CD4-positive, alpha-beta T cell (primary cell): ENCODE measurements at regions of chrX and their contacts with region 1.

Region 1: DNA sequence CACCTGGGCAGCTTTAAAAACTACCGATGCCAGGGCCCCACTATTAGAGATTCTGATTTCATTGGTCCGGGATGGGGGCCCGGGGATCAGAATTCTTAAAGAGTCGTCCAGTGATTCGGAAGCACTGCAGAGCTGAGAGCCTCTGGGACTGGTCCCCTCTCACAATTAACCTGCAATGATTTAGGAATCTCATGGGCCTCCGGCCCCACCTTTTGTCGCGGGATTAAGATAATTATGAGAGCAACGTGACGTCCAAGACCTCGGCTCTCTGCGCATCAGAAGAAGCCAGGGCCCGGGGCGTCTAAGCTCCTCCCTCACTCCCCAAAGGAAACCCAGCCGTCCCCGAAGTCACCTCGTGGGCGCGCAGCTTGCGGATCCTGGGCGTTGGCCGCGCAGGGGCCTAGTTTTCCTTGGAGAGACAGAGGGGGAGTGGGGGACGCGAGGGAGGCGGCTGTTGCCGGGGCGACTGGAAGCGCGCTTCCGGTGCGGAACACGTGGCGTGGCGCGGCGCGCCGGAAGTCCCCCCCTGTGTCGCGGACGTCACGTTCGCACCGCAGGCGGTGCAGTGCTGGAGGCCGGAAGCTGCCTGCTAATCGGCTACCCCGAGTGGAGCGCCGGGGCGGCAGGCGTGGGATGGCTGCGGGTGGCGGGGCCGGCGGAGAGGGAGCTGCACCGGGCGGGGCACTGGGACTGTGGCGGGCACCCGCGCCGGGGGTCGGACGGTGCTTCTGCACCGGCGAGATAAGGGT is at the start of gene GEMIN8:
- DNase-seq: peak; percentile 73 to 94 (median 84)
- ATAC-seq: peak; percentile 85
- H3K4me3 ChIP-seq: peak within 1 kb of the TSS; percentile 82
- H3K4me3 Mint-ChIP-seq: peak within 1 kb of the TSS; percentile 99
- H3K27ac ChIP-seq: peak within 1 kb of the TSS; percentile 82 to 93
- H3K27ac Mint-ChIP-seq: peak within 1 kb of the TSS; percentile 97
- H3K4me1 ChIP-seq: peaks cover 29% of the 10 kb centered on the region
- H3K4me1 Mint-ChIP-seq: peaks cover 52% of the 10 kb centered on the region
- H3K27me3 ChIP-seq: no peaks in the 10 kb centered on the region
- H3K27me3 Mint-ChIP-seq: no peaks in the 10 kb centered on the region
- CTCF ChIP-seq: no peak
- total RNA-seq, gene GEMIN8: 10.2 to 11.1 TPM

Region 2: GRCh38 chrX:13506574-13506973 is 523.0 kb before region 1 on chrX:
- CTCF ChIA-PET with region 1: interaction called, 7 read pairs
- POLR2A ChIA-PET with region 1: interaction called, 6 read pairs
- intact Hi-C with region 1: loop called in 1 of 2 experiments (anchors 1 kb)
- DNase-seq: peak; percentile 12 to 73 (median 38)
- ATAC-seq: no peak
- H3K4me3 ChIP-seq: no peak overlapping the region
- H3K4me3 Mint-ChIP-seq: no peak overlapping the region
- H3K27ac ChIP-seq: no peak overlapping the region
- H3K27ac Mint-ChIP-seq: no peak overlapping the region
- H3K4me1 ChIP-seq: no peaks in the 10 kb centered on the region
- H3K4me1 Mint-ChIP-seq: no peaks in the 10 kb centered on the region
- H3K27me3 ChIP-seq: no peaks in the 10 kb centered on the region
- H3K27me3 Mint-ChIP-seq: no peaks in the 10 kb centered on the region
- CTCF ChIP-seq: peak; percentile 76

Region 3: GRCh38 chrX:13658602-13659001 is 371.0 kb before region 1 on chrX:
- CTCF ChIA-PET with region 1: interaction called, 3 read pairs
- POLR2A ChIA-PET with region 1: interaction called, 13 read pairs
- intact Hi-C with region 1: loop called (anchors 1 to 2 kb)
- DNase-seq: peak in 4 of 14 experiments; percentile 14 to 76 (median 74)
- ATAC-seq: peak; percentile 59
- H3K4me3 ChIP-seq: no peak overlapping the region
- H3K4me3 Mint-ChIP-seq: peak overlapping the region; percentile 7
- H3K27ac ChIP-seq: peak overlapping the region in 1 of 2 donors; percentile 22
- H3K27ac Mint-ChIP-seq: peak overlapping the region; percentile 82
- H3K4me1 ChIP-seq: peaks cover 7% of the 10 kb centered on the region
- H3K4me1 Mint-ChIP-seq: peaks cover 24% of the 10 kb centered on the region
- H3K27me3 ChIP-seq: no peaks in the 10 kb centered on the region
- H3K27me3 Mint-ChIP-seq: no peaks in the 10 kb centered on the region
- CTCF ChIP-seq: no peak

Region 4: GRCh38 chrX:13750204-13750603 is 279.4 kb before region 1 on chrX:
- CTCF ChIA-PET with region 1: interaction called, 3 read pairs
- POLR2A ChIA-PET with region 1: no interaction called
- intact Hi-C with region 1: loop called (anchors 1 kb)
- DNase-seq: peak in 4 of 14 experiments; percentile 15 to 67 (median 60)
- ATAC-seq: peak; percentile 65
- H3K4me3 ChIP-seq: no peak overlapping the region
- H3K4me3 Mint-ChIP-seq: no peak overlapping the region
- H3K27ac ChIP-seq: no peak overlapping the region
- H3K27ac Mint-ChIP-seq: peak overlapping the region; percentile 6
- H3K4me1 ChIP-seq: peaks cover 3% of the 10 kb centered on the region
- H3K4me1 Mint-ChIP-seq: peaks cover 28% of the 10 kb centered on the region
- H3K27me3 ChIP-seq: no peaks in the 10 kb centered on the region
- H3K27me3 Mint-ChIP-seq: no peaks in the 10 kb centered on the region
- CTCF ChIP-seq: peak; percentile 62